Uterus (tissue), 4 donors: ENCODE measurements at regions of chr1 and their contacts with region 1.

Region 1: GRCh38 chr1:27087371-27088220 is 67.3 kb downstream of the SLC9A1 start:
- DNase-seq: no peak
- H3K4me3 ChIP-seq: no peak overlapping the region
- H3K27ac ChIP-seq: no peak overlapping the region
- H3K4me1 ChIP-seq: no peaks in the 10 kb centered on the region
- H3K27me3 ChIP-seq: no peaks in the 10 kb centered on the region
- CTCF ChIP-seq: no peak
- POLR2A ChIP-seq: no peak

Region 2: DNA sequence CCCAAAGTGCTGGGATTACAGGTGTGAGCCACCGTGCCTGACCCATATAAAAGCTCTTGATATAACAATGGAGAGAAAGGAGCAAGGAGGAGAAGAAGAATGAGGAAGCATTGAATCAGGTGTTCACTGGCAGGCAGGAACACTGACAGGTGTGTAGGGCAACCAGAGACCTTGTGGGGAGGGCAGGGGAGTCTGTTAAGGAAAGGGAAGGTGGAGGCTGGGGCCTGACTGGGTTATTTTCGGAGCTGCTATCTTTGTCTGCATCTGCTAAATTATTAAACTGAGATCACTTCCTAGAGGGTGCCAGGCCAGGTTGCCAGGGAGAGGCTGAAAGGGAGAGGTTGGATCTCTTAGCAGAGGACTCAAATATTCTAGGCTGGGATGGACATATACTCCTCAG is 100.9 kb before region 1 on chr1:
- intact Hi-C with region 1: loop called (anchors 5 kb)
- DNase-seq: no peak
- H3K4me3 ChIP-seq: no peak overlapping the region
- H3K27ac ChIP-seq: no peak overlapping the region
- H3K4me1 ChIP-seq: no peaks in the 10 kb centered on the region
- H3K27me3 ChIP-seq: no peaks in the 10 kb centered on the region
- CTCF ChIP-seq: no peak
- POLR2A ChIP-seq: no peak

Region 3: GRCh38 chr1:27192039-27192529 is 104.5 kb after region 1 on chr1:
- intact Hi-C with region 1: no loop called
- DNase-seq: no peak
- H3K4me3 ChIP-seq: no peak overlapping the region
- H3K27ac ChIP-seq: no peak overlapping the region
- H3K4me1 ChIP-seq: no peaks in the 10 kb centered on the region
- H3K27me3 ChIP-seq: no peaks in the 10 kb centered on the region
- CTCF ChIP-seq: no peak
- POLR2A ChIP-seq: no peak